ENCODE measurements at regions of chr1 and their contacts with region 1.

Region 1: DNA sequence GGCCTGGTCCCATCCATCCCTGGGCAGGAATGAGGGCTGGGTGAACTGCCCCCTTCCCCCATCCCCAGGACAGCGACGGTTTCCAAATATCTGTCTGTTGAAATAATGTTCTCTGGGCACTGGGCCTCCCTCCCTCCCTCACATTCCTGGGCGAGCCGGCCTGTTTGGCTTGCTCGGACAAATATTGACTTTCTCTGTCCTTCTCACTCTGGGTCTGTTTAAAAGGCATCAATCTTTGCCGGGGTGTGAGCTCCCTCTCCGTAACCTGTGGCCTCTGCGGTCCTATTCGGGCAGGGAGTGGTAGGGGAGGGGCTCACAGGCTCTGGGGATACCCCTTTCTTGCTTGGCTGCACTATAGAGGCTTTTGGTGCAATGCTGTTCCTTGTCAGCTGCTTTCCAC is 40.2 kb downstream of the FOXD2 start:
- DNase-seq: no peak
- ATAC-seq: no peak
- H3K4me3 Mint-ChIP-seq: no peak overlapping the region
- H3K27ac Mint-ChIP-seq: 0 out of 2 replicates have a peak overlapping the region, but pooled peaks have one; percentile 27
- H3K4me1 Mint-ChIP-seq: peaks cover 12% of the 10 kb centered on the region
- H3K27me3 Mint-ChIP-seq: peaks cover 19% of the 10 kb centered on the region
- CTCF ChIP-seq: no peak

Region 2: DNA sequence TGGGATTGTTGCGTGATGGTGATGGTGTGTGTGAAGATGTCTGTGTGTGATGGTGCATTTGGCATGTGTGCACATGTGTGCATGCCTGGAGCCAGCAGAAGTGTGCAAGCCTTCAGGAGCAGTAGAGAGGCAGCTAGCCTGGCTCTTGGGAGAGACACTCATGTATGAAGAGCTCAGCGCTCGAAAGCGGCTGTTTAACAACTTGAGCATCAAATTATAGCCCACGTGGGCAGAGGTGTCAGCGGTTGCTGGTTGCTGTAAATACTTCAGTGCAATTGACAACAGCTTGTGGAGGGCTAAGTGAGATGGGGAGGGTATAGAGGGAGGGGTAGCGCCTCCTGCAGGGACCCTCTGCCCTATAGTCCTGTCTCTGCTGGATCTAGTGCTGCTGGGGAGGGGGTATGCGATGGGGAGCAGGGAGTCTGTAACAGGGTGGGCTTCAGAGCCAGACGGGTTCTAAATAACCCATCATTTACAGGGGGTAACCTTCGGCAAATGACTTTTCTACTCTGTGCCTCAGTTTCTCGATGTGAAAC is 18.8 kb before region 1 on chr1:
- CTCF ChIA-PET with region 1: interaction called, 10 read pairs
- POLR2A ChIA-PET with region 1: no interaction called
- DNase-seq: no peak
- ATAC-seq: peak; percentile 71
- H3K4me3 Mint-ChIP-seq: no peak overlapping the region
- H3K27ac Mint-ChIP-seq: no peak overlapping the region
- H3K4me1 Mint-ChIP-seq: peaks cover 31% of the 10 kb centered on the region
- H3K27me3 Mint-ChIP-seq: peaks cover 47% of the 10 kb centered on the region
- CTCF ChIP-seq: no peak

Measured in WTC11 (cell line).